AG04449 (cell line): ENCODE measurements at regions of chr11 and their contacts with region 1.

Region 1: DNA sequence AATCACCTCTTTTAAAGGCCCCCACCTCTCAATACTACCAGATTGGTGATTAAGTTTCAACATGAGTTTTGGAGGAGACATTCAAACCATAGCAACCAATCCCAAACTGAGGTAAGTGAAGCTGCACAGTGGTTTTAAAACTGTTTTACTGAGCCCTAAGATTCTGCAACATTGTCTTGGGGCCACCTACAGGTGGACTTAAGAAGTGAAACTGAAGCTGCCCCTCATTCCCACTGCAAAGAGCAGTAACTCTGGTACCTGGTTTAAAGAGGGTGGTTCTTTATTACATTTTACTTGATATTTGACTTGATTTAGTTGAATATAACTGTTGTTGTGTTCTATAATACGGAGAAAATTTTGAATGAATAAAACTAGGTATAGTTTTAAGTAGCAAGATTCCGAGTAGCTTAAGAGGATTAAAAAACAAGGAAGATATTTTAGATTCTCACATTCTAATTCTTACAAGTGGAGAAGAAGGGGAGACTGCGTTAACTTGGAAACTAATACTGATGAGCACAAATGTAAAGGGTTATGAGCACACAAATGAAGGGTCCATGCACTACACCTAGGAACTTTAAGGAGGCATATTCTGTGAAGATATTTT is 26.7 kb downstream of the SYT9 start:
- DNase-seq: no peak
- H3K4me3 ChIP-seq: no peak overlapping the region
- CTCF ChIP-seq: peak; percentile 58

Region 2: DNA sequence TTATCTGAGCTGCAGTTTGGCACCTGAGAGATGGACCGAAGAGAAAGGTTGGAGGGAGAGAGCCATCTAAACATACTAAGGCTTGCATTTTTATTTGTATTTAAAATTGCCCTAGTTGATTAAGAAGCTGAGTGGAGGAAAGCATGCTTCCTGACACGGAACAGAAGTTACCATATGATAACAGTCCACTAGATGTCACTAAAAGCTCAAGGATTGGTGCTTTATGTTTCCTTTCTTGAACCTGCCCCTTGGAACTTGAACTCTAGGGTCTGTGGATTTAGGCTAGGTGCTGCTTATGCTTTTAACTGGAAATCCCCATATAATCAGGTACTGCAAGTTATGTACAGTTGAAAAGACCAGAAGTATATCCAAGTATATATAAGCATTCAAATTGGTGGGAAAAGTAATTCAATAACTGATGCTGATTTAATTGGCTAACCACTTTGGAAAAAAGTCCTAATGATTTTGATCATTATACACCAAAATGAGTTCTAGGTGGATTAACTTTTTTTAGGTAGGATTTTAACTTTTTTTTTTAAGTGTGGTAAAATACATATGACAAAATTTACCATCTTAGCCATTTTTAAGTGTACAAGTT is 180.1 kb before region 1 on chr11:
- CTCF ChIA-PET with region 1: interaction called, 14 read pairs
- POLR2A ChIA-PET with region 1: no interaction called
- DNase-seq: no peak
- H3K4me3 ChIP-seq: no peak overlapping the region
- CTCF ChIP-seq: peak; percentile 42

Region 3: DNA sequence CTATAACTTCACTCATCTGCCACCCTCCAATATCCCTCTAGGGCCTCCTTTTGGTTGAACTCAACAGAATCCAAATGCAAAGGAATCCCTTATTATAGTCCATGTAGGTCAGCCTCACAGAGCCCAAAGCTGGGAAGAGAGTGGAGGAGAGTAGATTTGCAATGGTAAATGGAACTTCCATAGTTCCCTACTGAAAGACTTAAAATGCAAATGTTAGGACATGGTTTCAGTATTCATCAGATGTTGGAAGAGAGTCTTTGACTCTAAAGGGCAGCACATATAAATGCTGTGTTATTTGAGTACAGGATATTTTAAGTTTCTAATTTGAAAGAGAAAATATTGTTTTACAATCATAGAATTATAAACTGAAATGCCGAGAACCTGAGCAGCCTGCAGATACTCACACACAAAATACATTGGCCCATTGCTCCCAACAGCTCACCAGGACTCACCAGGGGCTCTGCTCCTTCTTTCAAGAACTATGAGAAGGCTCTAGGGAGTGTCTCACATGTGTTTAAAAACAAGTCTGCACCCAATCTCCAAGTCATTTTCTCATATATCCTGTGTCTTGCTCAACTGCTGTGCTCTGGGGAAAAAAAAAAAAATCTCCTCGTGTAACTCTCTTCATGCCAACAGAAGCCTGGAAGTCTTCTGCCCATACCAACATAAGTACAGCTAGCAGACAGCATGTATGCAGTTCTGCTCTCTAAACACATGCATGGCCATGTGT is 12.8 kb after region 1 on chr11:
- CTCF ChIA-PET with region 1: interaction called, 10 read pairs
- POLR2A ChIA-PET with region 1: no interaction called
- DNase-seq: no peak
- H3K4me3 ChIP-seq: no peak overlapping the region
- CTCF ChIP-seq: no peak

Region 4: DNA sequence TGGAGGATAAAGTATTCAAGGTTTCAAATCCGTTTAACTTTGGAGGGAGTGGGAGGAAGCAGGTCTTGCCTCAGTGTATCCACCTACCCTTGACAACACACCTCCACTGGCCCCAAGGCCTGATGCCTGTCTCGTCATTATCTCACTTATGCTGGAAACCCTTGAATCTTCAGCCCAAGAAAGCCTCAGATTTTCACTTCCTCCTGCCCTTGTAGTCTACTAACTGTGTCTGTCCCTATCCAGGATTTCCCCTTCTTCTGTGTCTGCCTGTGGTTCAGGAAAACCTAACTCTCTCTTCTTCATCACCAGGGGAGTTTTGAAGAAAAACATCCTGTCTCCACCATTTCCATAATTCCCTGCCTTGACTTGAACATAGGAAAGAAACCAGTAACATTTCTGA is 29.4 kb after region 1 on chr11:
- CTCF ChIA-PET with region 1: no interaction called
- POLR2A ChIA-PET with region 1: no interaction called
- DNase-seq: no peak
- H3K4me3 ChIP-seq: no peak overlapping the region
- CTCF ChIP-seq: no peak